Calu3 (cell line): ENCODE measurements at regions of chr6 and their contacts with region 1.

Region 1: DNA sequence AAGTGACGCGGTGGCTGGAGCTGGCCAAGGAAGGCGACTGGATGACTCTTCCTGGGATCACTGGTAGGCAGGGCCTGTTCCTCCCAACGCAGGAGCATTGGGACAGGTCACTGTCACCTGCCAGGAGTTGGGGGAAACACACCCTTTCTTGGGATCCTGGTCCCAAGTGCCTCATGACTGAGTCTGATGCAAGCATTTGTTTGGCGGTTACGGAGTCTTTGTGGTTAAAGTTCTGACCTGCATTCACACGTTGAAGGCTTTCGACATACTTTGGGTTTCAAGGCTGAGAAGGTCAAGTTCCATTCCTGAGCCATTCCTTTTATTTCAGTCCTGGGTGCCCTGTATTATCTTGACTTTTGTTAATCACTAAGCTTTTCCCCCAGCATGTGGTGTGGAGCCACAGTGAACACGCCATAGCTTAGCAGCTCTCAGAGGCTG is 6.0 kb downstream of the PNLDC1 start:
- DNase-seq: peak; percentile 55
- H3K4me3 Mint-ChIP-seq: no peak overlapping the region
- H3K27ac Mint-ChIP-seq: peak overlapping the region; percentile 44
- H3K4me1 Mint-ChIP-seq: peaks cover 29% of the 10 kb centered on the region
- H3K27me3 Mint-ChIP-seq: peaks cover 11% of the 10 kb centered on the region
- CTCF ChIP-seq: no peak

Region 2: DNA sequence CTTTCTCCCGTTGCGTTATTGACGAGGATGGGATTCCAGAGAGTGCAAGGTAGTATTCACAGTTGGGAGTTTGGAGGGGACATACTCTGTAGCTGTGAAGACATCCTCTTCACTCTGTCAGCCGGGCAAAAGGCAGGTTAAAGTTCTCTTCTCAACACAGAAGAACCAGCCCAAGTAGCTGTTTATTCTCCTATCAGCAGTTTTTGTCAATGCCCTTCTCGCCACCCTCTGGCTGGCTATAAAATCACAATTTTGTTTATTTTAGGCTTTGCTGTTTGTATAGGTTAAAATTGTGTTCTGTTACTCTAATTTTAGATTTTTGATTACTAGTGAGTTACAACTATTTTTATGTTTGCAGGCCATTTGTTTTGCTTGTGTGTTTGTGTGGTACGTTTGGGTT is 46.8 kb after region 1 on chr6:
- CTCF ChIA-PET with region 1: interaction called, 4 read pairs
- intact Hi-C with region 1: loop called (anchors 5 kb)
- DNase-seq: peak; percentile 37
- H3K4me3 Mint-ChIP-seq: no peak overlapping the region
- H3K27ac Mint-ChIP-seq: no peak overlapping the region
- H3K4me1 Mint-ChIP-seq: no peaks in the 10 kb centered on the region
- H3K27me3 Mint-ChIP-seq: peaks cover 20% of the 10 kb centered on the region
- CTCF ChIP-seq: no peak

Region 3: DNA sequence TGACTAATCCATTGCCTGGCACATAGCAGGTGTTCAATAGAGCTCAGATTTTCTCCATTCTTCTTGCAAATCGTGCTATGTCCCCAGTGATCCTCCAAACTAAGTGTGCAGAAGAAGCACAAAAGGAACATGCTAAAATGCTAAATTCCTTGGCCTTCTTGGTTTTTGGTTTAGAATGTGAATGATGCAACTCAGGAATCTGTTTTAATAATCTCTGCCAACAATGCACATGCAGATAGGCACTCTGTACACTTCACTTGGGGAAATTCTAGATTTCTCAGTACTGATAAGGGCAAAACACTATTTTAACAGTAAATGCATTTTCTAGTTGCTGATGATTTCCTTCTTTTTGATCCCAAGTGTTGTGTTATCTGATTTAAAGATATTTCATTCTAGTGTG is 350.8 kb after region 1 on chr6:
- CTCF ChIA-PET with region 1: no interaction called
- intact Hi-C with region 1: no loop called
- DNase-seq: no peak
- H3K4me3 Mint-ChIP-seq: no peak overlapping the region
- H3K27ac Mint-ChIP-seq: no peak overlapping the region
- H3K4me1 Mint-ChIP-seq: no peaks in the 10 kb centered on the region
- H3K27me3 Mint-ChIP-seq: no peaks in the 10 kb centered on the region
- CTCF ChIP-seq: no peak